Activated B cell treated with CpG ODN at 0.5 μM for 24 hours (primary cell): ENCODE measurements at regions of chr15 and their contacts with region 1.

Region 1: GRCh38 chr15:75042730-75043508 is 19.5 kb downstream of the PPCDC start:
- DNase-seq: peak; percentile 82
- ATAC-seq: peak; percentile 87
- H3K4me3 Mint-ChIP-seq: peak overlapping the region; percentile 70
- H3K27ac Mint-ChIP-seq: peak overlapping the region; percentile 84
- H3K4me1 Mint-ChIP-seq: peaks cover 60% of the 10 kb centered on the region
- H3K27me3 Mint-ChIP-seq: no peaks in the 10 kb centered on the region
- CTCF ChIP-seq: no peak

Region 2: GRCh38 chr15:74988007-74988800 is 54.7 kb before region 1 on chr15:
- CTCF ChIA-PET with region 1: no interaction called
- POLR2A ChIA-PET with region 1: no interaction called
- intact Hi-C with region 1: no loop called
- DNase-seq: no peak
- ATAC-seq: peak; percentile 60
- H3K4me3 Mint-ChIP-seq: no peak overlapping the region
- H3K27ac Mint-ChIP-seq: no peak overlapping the region
- H3K4me1 Mint-ChIP-seq: peaks cover 8% of the 10 kb centered on the region
- H3K27me3 Mint-ChIP-seq: peaks cover 46% of the 10 kb centered on the region
- CTCF ChIP-seq: no peak

Region 3: GRCh38 chr15:75008629-75009326 is 34.1 kb before region 1 on chr15:
- CTCF ChIA-PET with region 1: interaction called, 4 read pairs
- POLR2A ChIA-PET with region 1: interaction called, 3 read pairs
- intact Hi-C with region 1: loop called (anchors 1 kb)
- DNase-seq: no peak
- ATAC-seq: peak; percentile 85
- H3K4me3 Mint-ChIP-seq: peak overlapping the region; percentile 56
- H3K27ac Mint-ChIP-seq: peak overlapping the region; percentile 86
- H3K4me1 Mint-ChIP-seq: peaks cover 44% of the 10 kb centered on the region
- H3K27me3 Mint-ChIP-seq: peaks cover 20% of the 10 kb centered on the region
- CTCF ChIP-seq: no peak

Region 4: DNA sequence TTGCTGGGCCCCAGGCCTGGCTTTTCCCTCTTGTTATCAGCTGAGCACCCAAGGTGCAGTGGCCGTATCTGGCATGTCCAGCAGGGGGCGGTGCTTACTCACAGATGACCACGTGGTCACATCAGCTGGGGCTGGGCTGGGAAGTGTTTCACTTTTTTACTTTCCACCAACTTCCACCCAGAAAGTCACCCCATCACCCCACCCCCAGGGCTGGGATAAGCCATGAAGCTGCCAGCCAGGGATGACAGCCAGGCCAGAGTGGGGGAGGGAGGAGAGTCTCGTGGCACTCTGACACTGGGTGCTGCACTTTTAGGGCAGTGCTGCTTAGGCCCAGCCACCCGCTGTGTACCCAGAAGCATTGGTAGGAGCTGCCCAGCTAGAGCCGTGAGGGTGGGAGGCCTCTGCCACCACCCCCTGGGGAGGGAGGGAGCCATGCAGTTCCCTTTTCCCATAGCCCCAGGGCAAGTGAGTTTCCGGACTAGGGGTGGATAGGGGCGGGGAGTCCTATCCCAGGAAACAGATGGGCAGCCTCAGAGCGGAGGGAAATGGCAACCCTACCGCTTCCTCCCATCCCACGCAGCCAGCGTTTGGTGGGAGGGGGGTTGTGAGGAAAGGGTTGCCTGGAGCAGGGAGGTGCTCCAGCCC is 13.4 kb before region 1 on chr15:
- CTCF ChIA-PET with region 1: interaction called, 28 read pairs
- POLR2A ChIA-PET with region 1: interaction called, 25 read pairs
- intact Hi-C with region 1: loop called (anchors 1 kb)
- DNase-seq: peak; percentile 82
- ATAC-seq: peak; percentile 95
- H3K4me3 Mint-ChIP-seq: peak overlapping the region; percentile 61
- H3K27ac Mint-ChIP-seq: no peak overlapping the region
- H3K4me1 Mint-ChIP-seq: peaks cover 20% of the 10 kb centered on the region
- H3K27me3 Mint-ChIP-seq: no peaks in the 10 kb centered on the region
- CTCF ChIP-seq: no peak

Region 5: DNA sequence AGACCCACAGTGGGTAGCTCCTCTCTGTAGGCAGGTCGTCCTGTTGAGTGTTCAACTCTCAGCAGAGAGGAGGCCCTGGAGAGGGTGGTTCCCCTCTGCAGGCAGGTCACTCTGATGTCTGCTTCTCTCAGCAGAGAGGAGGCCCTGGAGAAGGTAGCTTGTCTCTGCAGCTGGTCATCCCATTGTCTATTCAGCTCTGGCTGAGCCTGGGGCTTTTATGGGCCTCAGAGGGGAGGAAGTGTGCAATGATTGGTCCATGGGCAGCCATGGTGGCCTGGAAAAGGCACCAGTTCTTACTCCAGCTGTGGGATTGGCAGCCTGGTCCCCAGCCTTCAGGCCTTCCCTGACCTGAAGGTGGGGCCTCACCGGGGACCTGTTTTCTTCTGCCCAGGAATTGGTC is 33.4 kb after region 1 on chr15:
- CTCF ChIA-PET with region 1: interaction called, 20 read pairs
- POLR2A ChIA-PET with region 1: interaction called, 10 read pairs
- intact Hi-C with region 1: loop called (anchors 2 kb)
- DNase-seq: no peak
- ATAC-seq: no peak
- H3K4me3 Mint-ChIP-seq: no peak overlapping the region
- H3K27ac Mint-ChIP-seq: no peak overlapping the region
- H3K4me1 Mint-ChIP-seq: peaks cover 28% of the 10 kb centered on the region
- H3K27me3 Mint-ChIP-seq: no peaks in the 10 kb centered on the region
- CTCF ChIP-seq: no peak

Region 6: GRCh38 chr15:75095594-75095993 is 52.7 kb after region 1 on chr15:
- CTCF ChIA-PET with region 1: interaction called, 12 read pairs
- POLR2A ChIA-PET with region 1: interaction called, 16 read pairs
- intact Hi-C with region 1: loop called (anchors 1 kb)
- DNase-seq: no peak
- ATAC-seq: peak; percentile 9
- H3K4me3 Mint-ChIP-seq: peak overlapping the region; percentile 50
- H3K27ac Mint-ChIP-seq: peak overlapping the region; percentile 73
- H3K4me1 Mint-ChIP-seq: peaks cover 36% of the 10 kb centered on the region
- H3K27me3 Mint-ChIP-seq: peaks cover 13% of the 10 kb centered on the region
- CTCF ChIP-seq: no peak

Region 7: GRCh38 chr15:75112848-75113492 is 70.1 kb after region 1 on chr15:
- CTCF ChIA-PET with region 1: interaction called, 32 read pairs
- POLR2A ChIA-PET with region 1: interaction called, 10 read pairs
- intact Hi-C with region 1: loop called (anchors 1 kb)
- DNase-seq: no peak
- ATAC-seq: peak; percentile 35
- H3K4me3 Mint-ChIP-seq: peak overlapping the region; percentile 4
- H3K27ac Mint-ChIP-seq: peak overlapping the region; percentile 68
- H3K4me1 Mint-ChIP-seq: peaks cover 63% of the 10 kb centered on the region
- H3K27me3 Mint-ChIP-seq: no peaks in the 10 kb centered on the region
- CTCF ChIP-seq: no peak

Region 8: DNA sequence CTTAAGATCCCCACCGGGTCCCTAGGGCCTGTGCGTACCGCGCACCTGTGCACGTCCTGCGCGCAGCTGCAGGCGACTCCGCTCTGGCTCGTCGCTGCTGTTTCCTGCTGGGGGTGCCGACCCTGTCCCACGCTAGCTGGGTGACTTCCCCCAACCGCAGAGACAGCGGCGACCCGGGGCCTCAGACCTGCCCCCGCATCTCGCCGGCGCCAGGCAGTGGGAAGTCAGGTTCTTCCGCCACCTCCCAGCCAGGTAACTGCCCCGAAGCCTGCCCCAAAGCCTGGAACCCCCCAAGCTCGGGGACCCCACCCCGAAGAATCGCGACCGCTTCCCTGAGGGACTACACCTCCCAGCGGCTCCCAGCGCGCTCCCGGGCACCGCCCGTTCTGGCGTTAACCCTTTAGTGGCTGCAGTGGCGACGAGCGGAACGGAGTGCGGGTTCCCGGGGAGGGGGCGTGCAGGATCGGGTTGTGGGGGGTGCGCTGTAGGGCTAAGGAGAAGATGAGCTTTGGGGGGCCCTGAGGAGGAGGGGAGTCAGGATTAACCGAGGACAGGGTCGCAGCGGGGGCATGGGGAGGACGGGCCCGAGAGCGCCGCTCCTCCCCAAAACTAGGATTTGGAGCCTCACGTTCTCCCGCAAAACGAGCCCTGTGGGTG is 304.4 kb after region 1 on chr15:
- CTCF ChIA-PET with region 1: no interaction called
- POLR2A ChIA-PET with region 1: no interaction called
- intact Hi-C with region 1: loop called (anchors 2 kb)
- DNase-seq: peak; percentile 69
- ATAC-seq: peak; percentile 77
- H3K4me3 Mint-ChIP-seq: peak overlapping the region; percentile 86
- H3K27ac Mint-ChIP-seq: peak overlapping the region; percentile 85
- H3K4me1 Mint-ChIP-seq: peaks cover 46% of the 10 kb centered on the region
- H3K27me3 Mint-ChIP-seq: peaks cover 1% of the 10 kb centered on the region
- CTCF ChIP-seq: no peak